ENCODE measurements at regions of chr7 and their contacts with region 1.

Region 1: DNA sequence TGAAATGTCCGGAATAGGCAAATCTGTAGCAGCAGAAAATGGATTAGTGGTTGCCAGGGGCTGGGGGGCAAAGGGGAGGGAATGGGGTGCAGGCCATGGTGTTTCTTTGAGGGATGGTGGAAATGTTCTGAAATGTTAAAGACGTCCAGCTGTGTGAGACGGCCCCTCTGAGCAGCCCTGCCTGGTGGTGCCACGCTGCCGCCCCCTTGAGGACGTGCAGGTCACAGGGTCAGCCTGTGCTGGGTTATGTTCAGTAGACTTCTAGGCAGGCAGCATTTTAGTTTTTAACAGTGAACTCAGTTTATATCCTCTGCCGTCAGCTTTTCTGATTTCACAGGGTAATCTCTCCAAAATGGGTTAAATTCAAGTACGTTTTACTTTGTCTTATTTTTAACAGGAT is 9.4 kb downstream of the NUB1 start:
- DNase-seq: no peak
- ATAC-seq: no peak
- H3K4me3 ChIP-seq: no peak overlapping the region
- H3K27ac ChIP-seq: no peak overlapping the region
- H3K4me1 ChIP-seq: peaks cover 4% of the 10 kb centered on the region
- H3K27me3 ChIP-seq: no peaks in the 10 kb centered on the region
- CTCF ChIP-seq: peak; percentile 49

Region 2: GRCh38 chr7:151315038-151315655 is 35.9 kb before region 1 on chr7:
- CTCF ChIA-PET with region 1: interaction called, 3 read pairs
- POLR2A ChIA-PET with region 1: no interaction called
- intact Hi-C with region 1: loop called (anchors 1 kb)
- DNase-seq: peak; percentile 82
- ATAC-seq: peak; percentile 82
- H3K4me3 ChIP-seq: no peak overlapping the region
- H3K27ac ChIP-seq: no peak overlapping the region
- H3K4me1 ChIP-seq: peaks cover 4% of the 10 kb centered on the region; the same call in 1 of the 2 replicates
- H3K27me3 ChIP-seq: no peaks in the 10 kb centered on the region
- CTCF ChIP-seq: peak; percentile 78

Region 3: DNA sequence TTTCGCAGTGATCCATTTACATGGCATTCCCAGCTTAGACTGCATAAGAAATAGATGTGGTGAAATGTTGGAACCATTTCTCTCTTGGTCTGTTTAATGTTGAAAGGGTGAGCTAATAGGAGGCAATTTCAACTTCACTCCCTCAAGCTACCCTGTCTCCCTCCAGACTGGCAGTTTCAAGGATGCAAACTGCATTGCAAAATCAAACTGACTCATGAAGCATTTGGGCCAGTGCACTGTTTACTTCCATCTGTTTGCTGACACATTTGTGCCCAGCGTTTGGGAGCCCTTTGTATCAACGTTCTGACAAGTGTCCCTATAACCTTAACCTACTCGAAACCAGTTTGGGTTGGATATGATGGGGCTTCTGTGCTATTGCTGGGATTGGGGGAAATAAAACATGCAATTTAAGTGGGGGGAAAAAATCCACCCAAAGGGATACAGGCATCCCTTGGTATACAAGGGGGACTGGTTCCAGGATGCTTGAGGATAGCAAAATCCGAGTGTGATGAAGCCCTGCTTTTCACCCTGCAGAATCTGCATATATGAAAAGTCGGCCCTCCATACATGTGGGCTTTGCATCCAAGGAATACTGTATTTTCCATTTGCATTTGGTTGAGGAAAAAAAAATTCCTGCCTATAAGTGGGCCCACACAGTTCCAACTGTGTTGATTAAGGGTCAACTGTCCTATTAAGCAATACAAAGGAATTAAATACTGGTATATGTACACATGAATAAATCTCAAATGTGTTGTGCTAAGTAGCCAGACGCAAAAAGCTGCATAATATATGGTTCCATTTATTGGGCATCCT is 153.1 kb after region 1 on chr7:
- CTCF ChIA-PET with region 1: no interaction called
- POLR2A ChIA-PET with region 1: no interaction called
- intact Hi-C with region 1: no loop called
- DNase-seq: peak; percentile 73
- ATAC-seq: peak; percentile 74
- H3K4me3 ChIP-seq: no peak overlapping the region
- H3K27ac ChIP-seq: no peak overlapping the region
- H3K4me1 ChIP-seq: peaks cover 37% of the 10 kb centered on the region
- H3K27me3 ChIP-seq: no peaks in the 10 kb centered on the region
- CTCF ChIP-seq: no peak

Region 4: GRCh38 chr7:152292898-152293297 is 941.9 kb after region 1 on chr7:
- CTCF ChIA-PET with region 1: no interaction called
- POLR2A ChIA-PET with region 1: no interaction called
- intact Hi-C with region 1: no loop called
- DNase-seq: no peak
- ATAC-seq: no peak; the same call in 1 of the 2 replicates
- H3K4me3 ChIP-seq: no peak overlapping the region
- H3K27ac ChIP-seq: no peak overlapping the region
- H3K4me1 ChIP-seq: no peaks in the 10 kb centered on the region
- H3K27me3 ChIP-seq: no peaks in the 10 kb centered on the region
- CTCF ChIP-seq: no peak